PC-9 (cell line): ENCODE measurements at regions of chr3 and their contacts with region 1.

Region 1: GRCh38 chr3:13767896-13768295 is 112.0 kb downstream of the WNT7A start:
- DNase-seq: no peak
- H3K4me3 ChIP-seq: no peak overlapping the region
- H3K27ac ChIP-seq: no peak overlapping the region
- H3K4me1 ChIP-seq: peaks cover 23% of the 10 kb centered on the region
- H3K27me3 ChIP-seq: no peaks in the 10 kb centered on the region
- CTCF ChIP-seq: no peak

Region 2: GRCh38 chr3:13666781-13667709 is 100.9 kb before region 1 on chr3:
- CTCF ChIA-PET with region 1: no interaction called
- POLR2A ChIA-PET with region 1: no interaction called
- intact Hi-C with region 1: loop called (anchors 10 kb)
- DNase-seq: no peak
- H3K4me3 ChIP-seq: no peak overlapping the region
- H3K27ac ChIP-seq: no peak overlapping the region
- H3K4me1 ChIP-seq: no peaks in the 10 kb centered on the region
- H3K27me3 ChIP-seq: no peaks in the 10 kb centered on the region
- CTCF ChIP-seq: no peak